CD8-positive, alpha-beta T cell (primary cell): ENCODE measurements at regions of chr17 and their contacts with region 1.

Region 1: GRCh38 chr17:68205251-68205807 is 42.5 kb upstream of the AMZ2 start:
- DNase-seq: peak; percentile 87 to 96 (median 93)
- ATAC-seq: peak; percentile 70
- H3K4me3 ChIP-seq: peak overlapping the region; percentile 68 to 78
- H3K4me3 Mint-ChIP-seq: peak overlapping the region; percentile 88
- H3K27ac ChIP-seq: peak overlapping the region; percentile 77 to 78
- H3K27ac Mint-ChIP-seq: peak overlapping the region; percentile 93
- H3K4me1 ChIP-seq: peaks cover 23% of the 10 kb centered on the region
- H3K4me1 Mint-ChIP-seq: peaks cover 37% of the 10 kb centered on the region
- H3K27me3 ChIP-seq: no peaks in the 10 kb centered on the region
- H3K27me3 Mint-ChIP-seq: no peaks in the 10 kb centered on the region
- CTCF ChIP-seq: peak; percentile 89

Region 2: DNA sequence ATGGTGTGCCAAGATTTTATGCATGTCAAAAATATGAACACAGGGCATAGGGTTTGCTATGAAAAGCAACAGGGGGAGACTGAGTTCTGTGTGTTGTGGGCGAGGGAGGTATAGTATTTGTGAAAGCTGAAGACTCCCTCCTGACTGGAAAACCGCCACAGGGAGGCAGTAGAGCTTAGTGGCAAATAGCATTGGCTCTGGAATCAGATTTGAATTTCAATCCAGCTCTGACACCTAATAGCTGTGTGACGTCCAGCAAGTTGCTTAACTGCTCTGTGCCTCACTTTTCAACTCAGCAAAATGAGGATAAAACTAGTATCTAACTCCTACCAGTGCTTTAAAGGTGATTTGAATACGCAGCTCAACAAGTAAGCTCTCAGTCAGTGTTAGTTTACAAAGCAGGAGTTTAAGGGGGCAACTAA is 147.8 kb before region 1 on chr17:
- CTCF ChIA-PET with region 1: interaction called, 7 read pairs
- POLR2A ChIA-PET with region 1: no interaction called
- intact Hi-C with region 1: loop called in 1 of 2 experiments (anchors 5 kb)
- DNase-seq: peak; percentile 19 to 67 (median 51)
- ATAC-seq: peak; percentile 86
- H3K4me3 ChIP-seq: no peak overlapping the region
- H3K4me3 Mint-ChIP-seq: no peak overlapping the region
- H3K27ac ChIP-seq: no peak overlapping the region
- H3K27ac Mint-ChIP-seq: no peak overlapping the region
- H3K4me1 ChIP-seq: no peaks in the 10 kb centered on the region
- H3K4me1 Mint-ChIP-seq: peaks cover 5% of the 10 kb centered on the region
- H3K27me3 ChIP-seq: no peaks in the 10 kb centered on the region
- H3K27me3 Mint-ChIP-seq: no peaks in the 10 kb centered on the region
- CTCF ChIP-seq: peak; percentile 67

Region 3: DNA sequence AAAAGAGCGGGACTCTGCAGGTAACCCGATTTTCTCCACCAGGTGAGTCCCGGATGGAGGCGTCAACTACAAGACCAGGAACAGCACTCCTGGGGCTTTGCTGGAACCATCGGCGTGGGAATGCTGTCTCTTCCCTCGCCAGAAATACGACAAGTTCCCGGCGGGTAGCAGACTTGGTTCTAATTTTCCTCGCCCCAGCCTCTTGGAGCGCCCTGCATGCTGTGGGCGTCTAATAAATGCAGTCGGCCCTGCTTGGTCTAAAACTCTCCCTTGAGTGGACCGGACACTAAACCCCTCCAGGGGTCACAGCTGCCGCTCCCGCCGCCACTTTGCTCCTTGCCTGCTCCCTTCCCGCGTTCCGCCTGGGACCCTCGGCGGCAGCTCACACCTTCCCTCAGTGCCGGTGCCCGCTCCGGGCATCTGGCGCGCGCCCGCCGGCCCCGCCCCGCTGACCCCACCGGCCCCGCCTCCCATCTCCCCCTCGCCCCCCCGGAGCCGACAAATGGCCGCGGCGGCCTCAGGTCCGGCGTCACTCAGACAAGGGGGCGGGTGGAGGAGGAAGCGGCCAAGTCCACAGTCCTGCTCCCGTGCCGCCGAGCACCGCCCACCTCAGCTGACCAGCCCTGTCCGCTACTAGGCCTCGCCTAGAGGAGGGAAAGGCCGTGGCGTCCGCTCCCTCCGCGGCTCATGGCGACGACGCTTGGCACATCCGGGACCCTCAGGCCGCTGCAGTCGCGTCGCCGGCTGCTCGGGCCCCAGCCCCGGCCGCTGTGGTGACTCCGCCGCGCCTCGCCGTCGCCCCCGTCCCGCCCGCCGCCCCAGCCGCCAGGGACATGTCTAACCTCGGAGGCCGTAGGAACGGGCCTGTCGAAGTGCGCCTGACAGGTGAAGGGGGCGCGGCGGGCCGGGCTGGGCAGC is 104.0 kb before region 1 on chr17:
- CTCF ChIA-PET with region 1: interaction called, 3 read pairs
- POLR2A ChIA-PET with region 1: no interaction called
- intact Hi-C with region 1: loop called in 1 of 2 experiments (anchors 5 kb)
- DNase-seq: peak; percentile 38 to 83 (median 67)
- ATAC-seq: peak; percentile 70
- H3K4me3 ChIP-seq: peak overlapping the region; percentile 75 to 83
- H3K4me3 Mint-ChIP-seq: peak overlapping the region; percentile 96
- H3K27ac ChIP-seq: peak overlapping the region; percentile 73 to 88
- H3K27ac Mint-ChIP-seq: peak overlapping the region; percentile 97
- H3K4me1 ChIP-seq: peaks cover 12% of the 10 kb centered on the region
- H3K4me1 Mint-ChIP-seq: peaks cover 42% of the 10 kb centered on the region
- H3K27me3 ChIP-seq: no peaks in the 10 kb centered on the region
- H3K27me3 Mint-ChIP-seq: no peaks in the 10 kb centered on the region
- CTCF ChIP-seq: no peak

Region 4: GRCh38 chr17:68133346-68134045 is 71.8 kb before region 1 on chr17:
- CTCF ChIA-PET with region 1: no interaction called
- POLR2A ChIA-PET with region 1: no interaction called
- intact Hi-C with region 1: no loop called
- DNase-seq: no peak
- ATAC-seq: no peak
- H3K4me3 ChIP-seq: no peak overlapping the region
- H3K4me3 Mint-ChIP-seq: no peak overlapping the region
- H3K27ac ChIP-seq: no peak overlapping the region
- H3K27ac Mint-ChIP-seq: no peak overlapping the region
- H3K4me1 ChIP-seq: no peaks in the 10 kb centered on the region
- H3K4me1 Mint-ChIP-seq: no peaks in the 10 kb centered on the region
- H3K27me3 ChIP-seq: no peaks in the 10 kb centered on the region
- H3K27me3 Mint-ChIP-seq: no peaks in the 10 kb centered on the region
- CTCF ChIP-seq: no peak

Region 5: GRCh38 chr17:68172461-68172954 is 32.8 kb before region 1 on chr17:
- CTCF ChIA-PET with region 1: interaction called, 226 read pairs
- POLR2A ChIA-PET with region 1: interaction called, 5 read pairs
- intact Hi-C with region 1: loop called (anchors 1 kb)
- DNase-seq: peak; percentile 54 to 85 (median 80)
- ATAC-seq: peak; percentile 81
- H3K4me3 ChIP-seq: no peak overlapping the region
- H3K4me3 Mint-ChIP-seq: no peak overlapping the region
- H3K27ac ChIP-seq: no peak overlapping the region
- H3K27ac Mint-ChIP-seq: no peak overlapping the region
- H3K4me1 ChIP-seq: peaks cover 19% of the 10 kb centered on the region
- H3K4me1 Mint-ChIP-seq: peaks cover 37% of the 10 kb centered on the region
- H3K27me3 ChIP-seq: no peaks in the 10 kb centered on the region
- H3K27me3 Mint-ChIP-seq: no peaks in the 10 kb centered on the region
- CTCF ChIP-seq: peak; percentile 99

Region 6: GRCh38 chr17:68238164-68238872 is 33.0 kb after region 1 on chr17:
- CTCF ChIA-PET with region 1: interaction called, 6 read pairs
- POLR2A ChIA-PET with region 1: interaction called, 24 read pairs
- intact Hi-C with region 1: loop called in 1 of 2 experiments (anchors 2 kb)
- DNase-seq: peak in 4 of 9 experiments; percentile 16 to 74 (median 50)
- ATAC-seq: peak; percentile 3
- H3K4me3 ChIP-seq: peak overlapping the region in 1 of 2 experiments; percentile 35
- H3K4me3 Mint-ChIP-seq: peak overlapping the region; percentile 79
- H3K27ac ChIP-seq: peak overlapping the region; percentile 79 to 98
- H3K27ac Mint-ChIP-seq: peak overlapping the region; percentile 98
- H3K4me1 ChIP-seq: peaks cover 42% of the 10 kb centered on the region
- H3K4me1 Mint-ChIP-seq: peaks cover 54% of the 10 kb centered on the region
- H3K27me3 ChIP-seq: no peaks in the 10 kb centered on the region
- H3K27me3 Mint-ChIP-seq: no peaks in the 10 kb centered on the region
- CTCF ChIP-seq: no peak

Region 7: GRCh38 chr17:68247445-68248198 is 42.3 kb after region 1 on chr17 and contains the start of gene AMZ2:
- CTCF ChIA-PET with region 1: interaction called, 10 read pairs
- POLR2A ChIA-PET with region 1: interaction called, 43 read pairs
- intact Hi-C with region 1: loop called (anchors 1 to 2 kb)
- DNase-seq: peak; percentile 94 to 99 (median 98)
- ATAC-seq: peak; percentile 91
- H3K4me3 ChIP-seq: peak within 1 kb of the TSS; percentile 70 to 94
- H3K4me3 Mint-ChIP-seq: peak within 1 kb of the TSS; percentile 96
- H3K27ac ChIP-seq: peak within 1 kb of the TSS; percentile 93 to 96
- H3K27ac Mint-ChIP-seq: peak within 1 kb of the TSS; percentile 98
- H3K4me1 ChIP-seq: peaks cover 34% of the 10 kb centered on the region
- H3K4me1 Mint-ChIP-seq: peaks cover 42% of the 10 kb centered on the region
- H3K27me3 ChIP-seq: no peaks in the 10 kb centered on the region
- H3K27me3 Mint-ChIP-seq: no peaks in the 10 kb centered on the region
- CTCF ChIP-seq: no peak
- total RNA-seq, gene AMZ2: 61.0 to 71.1 TPM

Region 8: DNA sequence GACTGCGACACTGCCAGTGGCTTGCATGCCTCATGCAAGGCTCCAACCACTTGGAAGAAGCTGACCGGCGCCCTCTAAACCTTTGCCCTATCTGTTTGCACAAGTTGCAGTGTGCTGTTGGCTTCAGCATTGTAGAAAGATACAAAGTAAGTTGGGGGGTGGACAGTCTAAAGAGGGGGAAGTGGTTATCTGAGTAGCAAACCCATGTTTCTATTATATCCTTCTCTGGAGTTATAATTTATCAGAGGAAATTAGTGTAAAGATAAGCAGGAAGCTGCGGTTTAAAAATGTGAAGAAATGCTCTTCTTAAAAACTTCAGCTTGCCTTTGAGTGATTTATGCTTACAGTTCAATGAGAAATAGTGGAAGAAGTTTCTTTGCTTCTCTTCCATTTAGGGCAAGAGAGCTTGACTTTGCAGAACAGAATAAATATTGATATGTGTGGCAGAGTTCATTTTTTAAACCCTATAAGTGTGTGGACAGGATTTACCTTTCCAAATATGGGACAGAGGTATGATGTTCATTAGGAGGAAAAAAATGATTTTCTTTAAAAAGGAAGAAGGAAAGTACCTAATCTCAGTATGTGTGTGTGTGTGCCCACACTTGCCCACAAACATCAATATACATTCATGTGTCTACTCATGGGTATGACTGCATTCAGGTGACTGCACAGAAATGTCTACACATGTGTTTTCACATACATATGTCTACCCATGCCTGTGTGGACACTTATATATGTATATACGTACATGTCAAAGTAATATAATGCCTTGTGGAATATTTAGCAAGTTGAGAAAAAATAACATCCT is 50.6 kb after region 1 on chr17:
- CTCF ChIA-PET with region 1: interaction called, 4 read pairs
- POLR2A ChIA-PET with region 1: interaction called, 9 read pairs
- intact Hi-C with region 1: loop called (anchors 1 kb)
- DNase-seq: peak in 3 of 9 experiments; percentile 33 to 74 (median 58)
- ATAC-seq: peak; percentile 22
- H3K4me3 ChIP-seq: no peak overlapping the region
- H3K4me3 Mint-ChIP-seq: peak overlapping the region; percentile 24
- H3K27ac ChIP-seq: peak overlapping the region; percentile 34 to 97
- H3K27ac Mint-ChIP-seq: peak overlapping the region; percentile 97
- H3K4me1 ChIP-seq: peaks cover 76% of the 10 kb centered on the region
- H3K4me1 Mint-ChIP-seq: peaks cover 82% of the 10 kb centered on the region
- H3K27me3 ChIP-seq: no peaks in the 10 kb centered on the region
- H3K27me3 Mint-ChIP-seq: no peaks in the 10 kb centered on the region
- CTCF ChIP-seq: no peak